GM12878 (cell line): ENCODE measurements at regions of chr22 and their contacts with region 1.

Region 1: DNA sequence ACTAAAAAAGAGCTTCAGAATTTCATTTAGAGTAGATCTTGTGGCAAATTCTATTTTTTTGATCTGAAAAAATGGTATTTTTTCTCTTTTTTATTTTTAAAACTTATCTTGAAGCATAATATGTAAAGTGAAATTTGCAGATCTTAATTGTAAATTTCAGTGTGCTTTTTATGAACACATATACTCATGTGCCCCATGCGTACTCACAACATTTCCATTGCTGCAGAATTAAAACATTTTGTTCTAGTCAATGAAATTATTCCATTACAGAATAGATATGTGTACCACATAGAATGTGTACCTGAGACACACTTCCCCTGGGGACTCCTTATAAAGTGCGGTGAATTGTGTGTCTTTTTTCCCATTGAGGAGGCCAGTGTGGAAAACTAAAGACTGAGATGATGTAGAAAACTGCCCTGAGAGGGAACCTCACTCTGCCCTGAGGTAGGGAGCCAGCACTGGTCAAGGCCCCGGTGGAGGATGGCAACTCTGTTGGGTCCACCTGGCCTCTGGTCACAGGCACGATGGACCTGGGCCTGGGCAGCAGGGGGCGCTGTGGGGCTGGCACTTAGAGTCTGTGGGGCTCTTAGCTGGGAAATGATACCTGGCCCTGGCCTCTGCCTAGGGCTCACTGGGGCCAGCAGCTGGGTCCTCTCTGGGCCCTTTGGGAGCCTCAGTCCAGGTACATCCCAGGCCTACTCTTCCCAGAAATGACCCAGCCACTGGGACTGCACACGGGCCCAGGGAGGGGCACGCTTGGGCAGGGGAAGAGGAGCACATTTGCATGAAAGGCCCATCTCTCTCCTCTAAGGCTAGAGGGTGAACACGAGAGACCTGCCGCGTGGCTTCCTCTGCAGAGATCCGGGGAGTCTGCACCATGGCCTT is 77.9 kb upstream of the TOP3B start:
- DNase-seq: no peak
- ATAC-seq: peak; percentile 99
- H3K4me3 ChIP-seq: no peak overlapping the region
- H3K27ac ChIP-seq: peak overlapping the region; percentile 43; the same call in 1 of the 2 replicates
- H3K4me1 ChIP-seq: peaks cover 15% of the 10 kb centered on the region
- H3K27me3 ChIP-seq: no peaks in the 10 kb centered on the region
- CTCF ChIP-seq: peak; percentile 74 to 98 (median 81)
- EP300 ChIP-seq: no peak
- POLR2A ChIP-seq: no peak
- RAD21 ChIP-seq: peak; percentile 68

Region 2: GRCh38 chr22:21996175-21996720 is 64.2 kb before region 1 on chr22:
- CTCF ChIA-PET with region 1: no interaction called
- POLR2A ChIA-PET with region 1: no interaction called
- RAD21 ChIA-PET with region 1: no interaction called
- SMC1A ChIA-PET with region 1: no interaction called
- in situ Hi-C with region 1: no loop called
- intact Hi-C with region 1: no loop called
- DNase-seq: no peak
- ATAC-seq: no peak
- H3K4me3 ChIP-seq: no peak overlapping the region
- H3K27ac ChIP-seq: no peak overlapping the region
- H3K4me1 ChIP-seq: no peaks in the 10 kb centered on the region
- H3K27me3 ChIP-seq: no peaks in the 10 kb centered on the region
- CTCF ChIP-seq: no peak
- EP300 ChIP-seq: no peak
- POLR2A ChIP-seq: no peak
- RAD21 ChIP-seq: no peak

Region 3: DNA sequence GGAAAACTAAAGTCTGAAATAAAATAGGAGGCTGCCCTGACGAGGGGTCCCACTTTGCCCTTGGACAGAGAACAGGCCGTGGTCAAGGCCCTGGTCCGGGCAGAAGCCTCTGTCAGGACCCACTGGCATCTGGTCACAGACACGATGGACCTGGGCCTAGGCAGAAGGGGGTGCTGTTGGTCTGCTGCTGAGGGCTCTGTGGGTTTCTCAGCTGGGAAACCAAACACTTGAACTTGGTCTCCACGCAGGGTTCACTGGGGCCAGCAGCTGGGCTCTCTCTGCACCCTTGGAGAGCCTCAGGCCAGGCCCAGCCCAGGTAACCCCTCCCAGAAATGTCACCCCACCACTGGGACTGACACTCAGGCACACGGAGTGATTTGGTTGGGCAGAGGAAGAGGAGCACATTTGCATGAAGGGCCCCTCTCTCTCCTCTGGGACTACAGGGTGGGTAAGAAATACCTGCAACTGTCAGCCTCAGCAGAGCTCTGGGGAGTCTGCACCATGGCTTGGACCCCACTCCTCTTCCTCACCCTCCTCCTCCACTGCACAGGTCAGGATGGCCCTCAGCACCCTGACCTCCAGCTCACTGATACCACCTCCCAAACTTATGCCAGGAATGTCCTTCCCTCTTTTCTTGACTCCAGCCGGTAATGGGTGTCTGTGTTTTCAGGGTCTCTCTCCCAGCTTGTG is 29.8 kb before region 1 on chr22:
- CTCF ChIA-PET with region 1: interaction called, 177 read pairs
- POLR2A ChIA-PET with region 1: interaction called, 16 read pairs
- RAD21 ChIA-PET with region 1: interaction called, 76 read pairs
- SMC1A ChIA-PET with region 1: interaction called, 76 read pairs
- in situ Hi-C with region 1: no loop called
- intact Hi-C with region 1: loop called (anchors 1 kb)
- DNase-seq: peak; percentile 84
- ATAC-seq: peak; percentile 82
- H3K4me3 ChIP-seq: peak overlapping the region; percentile 66
- H3K27ac ChIP-seq: peak overlapping the region; percentile 80
- H3K4me1 ChIP-seq: peaks cover 38% of the 10 kb centered on the region
- H3K27me3 ChIP-seq: no peaks in the 10 kb centered on the region
- CTCF ChIP-seq: peak; percentile 85 to 93 (median 88)
- EP300 ChIP-seq: no peak; a peak in 1 of 4 replicates
- POLR2A ChIP-seq: peak; percentile 92
- RAD21 ChIP-seq: peak; percentile 84

Region 4: GRCh38 chr22:22074634-22075381 is 14.4 kb after region 1 on chr22:
- CTCF ChIA-PET with region 1: interaction called, 42 read pairs
- POLR2A ChIA-PET with region 1: interaction called, 3 read pairs
- RAD21 ChIA-PET with region 1: interaction called, 8 read pairs
- SMC1A ChIA-PET with region 1: interaction called, 8 read pairs
- in situ Hi-C with region 1: no loop called
- intact Hi-C with region 1: no loop called
- DNase-seq: no peak
- ATAC-seq: no peak
- H3K4me3 ChIP-seq: no peak overlapping the region
- H3K27ac ChIP-seq: no peak overlapping the region
- H3K4me1 ChIP-seq: peaks cover 11% of the 10 kb centered on the region
- H3K27me3 ChIP-seq: no peaks in the 10 kb centered on the region
- CTCF ChIP-seq: no peak
- EP300 ChIP-seq: no peak
- POLR2A ChIP-seq: no peak
- RAD21 ChIP-seq: no peak

Region 5: GRCh38 chr22:22123118-22123959 is 62.9 kb after region 1 on chr22:
- CTCF ChIA-PET with region 1: interaction called, 14 read pairs
- POLR2A ChIA-PET with region 1: no interaction called
- RAD21 ChIA-PET with region 1: interaction called, 11 read pairs
- SMC1A ChIA-PET with region 1: interaction called, 17 read pairs
- in situ Hi-C with region 1: no loop called
- intact Hi-C with region 1: no loop called
- DNase-seq: no peak
- ATAC-seq: no peak
- H3K4me3 ChIP-seq: no peak overlapping the region
- H3K27ac ChIP-seq: no peak overlapping the region
- H3K4me1 ChIP-seq: no peaks in the 10 kb centered on the region
- H3K27me3 ChIP-seq: no peaks in the 10 kb centered on the region
- CTCF ChIP-seq: no peak
- EP300 ChIP-seq: no peak
- POLR2A ChIP-seq: no peak
- RAD21 ChIP-seq: no peak

Region 6: GRCh38 chr22:22144858-22145257 is 84.4 kb after region 1 on chr22:
- CTCF ChIA-PET with region 1: interaction called, 15 read pairs
- POLR2A ChIA-PET with region 1: interaction called, 3 read pairs
- RAD21 ChIA-PET with region 1: interaction called, 8 read pairs
- SMC1A ChIA-PET with region 1: interaction called, 5 read pairs
- in situ Hi-C with region 1: no loop called
- intact Hi-C with region 1: no loop called
- DNase-seq: no peak
- ATAC-seq: no peak
- H3K4me3 ChIP-seq: no peak overlapping the region
- H3K27ac ChIP-seq: no peak overlapping the region
- H3K4me1 ChIP-seq: no peaks in the 10 kb centered on the region
- H3K27me3 ChIP-seq: no peaks in the 10 kb centered on the region
- CTCF ChIP-seq: peak in 1 of 3 experiments; percentile 12; a peak in 1 of 6 replicates
- EP300 ChIP-seq: no peak
- POLR2A ChIP-seq: no peak
- RAD21 ChIP-seq: no peak

Region 7: GRCh38 chr22:22207845-22208564 is 147.6 kb after region 1 on chr22:
- CTCF ChIA-PET with region 1: interaction called, 10 read pairs
- POLR2A ChIA-PET with region 1: no interaction called
- RAD21 ChIA-PET with region 1: interaction called, 5 read pairs
- SMC1A ChIA-PET with region 1: no interaction called
- in situ Hi-C with region 1: no loop called
- intact Hi-C with region 1: no loop called
- DNase-seq: peak; percentile 62
- ATAC-seq: peak; percentile 94
- H3K4me3 ChIP-seq: no peak overlapping the region
- H3K27ac ChIP-seq: peak overlapping the region; percentile 45
- H3K4me1 ChIP-seq: peaks cover 3% of the 10 kb centered on the region
- H3K27me3 ChIP-seq: no peaks in the 10 kb centered on the region
- CTCF ChIP-seq: peak; percentile 66 to 78 (median 69); a peak in 5 of 6 replicates
- EP300 ChIP-seq: no peak
- POLR2A ChIP-seq: 0 out of 2 replicates have a peak, but pooled peaks have one; percentile 35
- RAD21 ChIP-seq: peak; percentile 81